Activated T-helper 1 cell treated with anti-CD3 and anti-CD28 coated beads, Interleukin-12 subunit alpha, Interleukin-12 subunit beta, Interleukin-2, Interleukin-4 antibody, amounts not matched to agents 30 ng/mL and 10 ng/mL and 1 ng/mL, durations not matched to agents 14 hours and 24 hours and 36 hours (primary cell): ENCODE measurements at regions of chr6 and their contacts with region 1.

Region 1: DNA sequence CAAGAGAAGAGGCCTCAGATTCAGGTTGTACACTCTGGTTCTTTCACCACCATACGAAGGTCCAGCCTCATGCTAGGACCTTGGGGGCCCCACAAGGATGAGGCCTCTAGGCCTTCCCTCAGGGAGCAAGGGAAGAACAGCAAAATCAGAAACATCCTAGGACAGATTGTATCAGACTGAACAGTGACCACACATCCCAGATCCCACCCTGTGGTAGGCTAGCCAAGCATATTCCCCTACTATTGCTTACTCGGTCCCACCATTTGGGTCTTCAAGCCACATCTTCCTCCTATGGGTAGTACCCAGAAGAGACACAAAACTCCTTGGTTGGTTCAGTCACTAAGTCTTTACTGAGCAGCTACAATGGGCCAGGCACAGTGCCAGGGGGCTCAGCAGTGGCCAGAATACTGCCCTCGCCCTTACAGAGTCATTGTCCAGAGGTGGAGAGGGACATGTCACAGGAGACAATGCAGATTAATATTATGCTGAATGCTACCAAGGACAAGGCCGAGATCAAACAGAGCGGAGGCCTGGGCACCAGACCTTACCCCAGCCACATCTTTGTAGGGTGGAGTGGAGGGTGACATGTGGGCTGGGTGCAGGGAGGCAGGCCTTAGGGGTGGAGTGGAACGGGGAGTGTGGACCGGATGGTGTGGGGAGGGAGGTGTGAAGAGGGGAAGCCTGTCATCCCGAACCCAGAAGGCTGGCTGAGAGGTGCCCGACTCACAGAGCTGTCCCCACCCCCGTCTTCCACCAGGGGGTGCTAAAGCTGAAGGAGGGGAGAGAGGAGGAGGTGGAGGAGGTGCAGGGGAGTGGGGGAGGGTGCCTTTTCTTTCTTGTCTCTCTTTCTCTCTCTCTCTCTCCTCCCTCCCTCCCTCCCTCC is 6.8 kb upstream of the MAPK13 start:
- DNase-seq: peak; percentile 88
- H3K4me3 Mint-ChIP-seq: peak overlapping the region; percentile 0
- H3K27ac Mint-ChIP-seq: peak overlapping the region; percentile 74
- H3K4me1 Mint-ChIP-seq: peaks cover 89% of the 10 kb centered on the region
- H3K27me3 Mint-ChIP-seq: no peaks in the 10 kb centered on the region

Region 2: GRCh38 chr6:35552285-35552917 is 571.1 kb before region 1 on chr6:
- intact Hi-C with region 1: no loop called
- DNase-seq: peak; percentile 40
- H3K4me3 Mint-ChIP-seq: no peak overlapping the region
- H3K27ac Mint-ChIP-seq: no peak overlapping the region
- H3K4me1 Mint-ChIP-seq: no peaks in the 10 kb centered on the region
- H3K27me3 Mint-ChIP-seq: peaks cover 14% of the 10 kb centered on the region

Region 3: DNA sequence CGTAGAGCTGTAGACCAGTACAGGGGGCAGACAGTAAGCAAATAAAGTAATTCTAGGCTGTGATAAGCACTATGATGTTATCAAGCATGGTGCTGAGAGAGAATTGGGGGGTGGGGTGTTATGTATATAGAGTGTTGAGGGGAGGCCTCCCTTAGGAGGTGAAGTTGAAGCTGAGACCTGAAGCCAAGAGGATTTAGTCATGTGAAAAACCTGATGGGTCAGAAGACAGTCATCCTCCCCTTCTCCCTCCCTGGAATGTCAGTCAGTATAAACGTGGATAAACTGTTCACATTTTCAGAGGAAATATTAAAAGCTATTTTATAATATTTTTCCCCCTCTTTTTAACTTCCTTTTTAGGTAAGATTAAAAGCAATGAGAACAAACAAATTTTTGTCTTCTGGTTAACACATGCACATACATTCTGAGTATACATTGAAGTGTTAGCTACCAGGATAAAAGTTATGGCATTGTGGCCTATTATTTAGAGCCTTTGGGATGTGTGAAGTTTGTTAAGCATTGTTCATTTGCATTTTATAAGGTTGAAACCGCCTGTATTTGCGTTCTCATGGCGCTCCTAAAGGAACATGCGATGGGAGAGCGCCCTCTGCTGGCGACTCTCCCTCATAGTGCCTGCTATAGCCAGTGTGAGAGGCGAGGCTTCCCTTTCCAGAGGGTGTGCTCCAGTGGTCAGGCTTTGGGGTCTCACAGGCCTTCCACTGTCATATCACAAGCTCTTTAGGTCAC is 28.6 kb before region 1 on chr6:
- intact Hi-C with region 1: loop called (anchors 2 kb)
- DNase-seq: peak; percentile 67
- H3K4me3 Mint-ChIP-seq: no peak overlapping the region
- H3K27ac Mint-ChIP-seq: peak overlapping the region; percentile 47
- H3K4me1 Mint-ChIP-seq: peaks cover 30% of the 10 kb centered on the region
- H3K27me3 Mint-ChIP-seq: no peaks in the 10 kb centered on the region

Region 4: DNA sequence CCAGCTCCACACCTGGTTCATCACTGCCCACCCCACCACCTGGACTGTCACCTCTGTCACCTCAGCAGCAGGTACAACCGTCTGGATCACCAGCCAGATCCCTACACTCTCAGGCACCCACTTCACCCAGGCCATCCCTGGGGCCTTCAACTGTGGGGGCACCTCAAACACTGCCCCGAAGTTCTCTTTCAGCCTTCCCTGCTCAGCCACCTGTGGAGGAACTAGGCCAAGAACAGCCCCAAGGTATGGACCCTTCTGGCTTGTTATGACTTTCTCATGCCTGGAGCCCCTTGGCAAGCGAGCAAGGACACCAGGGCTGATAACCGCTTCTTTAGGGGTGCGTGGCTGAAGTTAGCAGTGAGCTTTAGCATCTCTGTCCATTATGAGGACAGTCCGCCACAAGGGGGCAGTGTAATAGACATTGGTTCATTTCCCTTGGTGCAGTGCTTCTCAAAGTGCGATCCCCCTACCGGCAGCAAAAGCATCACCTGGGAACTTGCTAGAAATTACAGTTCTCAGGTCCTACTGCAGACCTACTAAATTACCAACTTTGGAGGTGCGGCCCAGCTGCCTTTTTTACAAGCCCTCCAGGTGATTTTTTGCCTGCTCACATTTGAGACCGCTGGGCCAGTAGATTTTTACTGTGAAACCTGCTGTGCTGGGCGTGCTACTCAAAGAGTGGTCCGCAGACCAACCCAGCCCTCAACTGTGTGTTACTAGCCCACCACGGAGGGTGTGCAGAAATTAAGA is 178.9 kb after region 1 on chr6:
- intact Hi-C with region 1: loop called (anchors 2 kb)
- DNase-seq: peak; percentile 85
- H3K4me3 Mint-ChIP-seq: no peak overlapping the region
- H3K27ac Mint-ChIP-seq: peak overlapping the region; percentile 18
- H3K4me1 Mint-ChIP-seq: peaks cover 8% of the 10 kb centered on the region
- H3K27me3 Mint-ChIP-seq: peaks cover 24% of the 10 kb centered on the region

Region 5: GRCh38 chr6:36442671-36443470 is 319.4 kb after region 1 on chr6 and contains the starts of genes KCTD20 and PXT1:
- intact Hi-C with region 1: loop called (anchors 5 kb)
- DNase-seq: peak; percentile 86
- H3K4me3 Mint-ChIP-seq: peak within 1 kb of the TSS; percentile 96
- H3K27ac Mint-ChIP-seq: peak within 1 kb of the TSS; percentile 95
- H3K4me1 Mint-ChIP-seq: peaks cover 48% of the 10 kb centered on the region
- H3K27me3 Mint-ChIP-seq: no peaks in the 10 kb centered on the region
- total RNA-seq, gene KCTD20: 62.4 and 62.8 TPM in 2 replicates
- total RNA-seq, gene PXT1: 0.16 and 0.29 TPM in 2 replicates

Region 6: GRCh38 chr6:36594029-36594815 is 470.7 kb after region 1 on chr6 and contains the start of gene SRSF3:
- intact Hi-C with region 1: loop called (anchors 10 kb)
- DNase-seq: peak; percentile 96
- H3K4me3 Mint-ChIP-seq: peak within 1 kb of the TSS; percentile 97
- H3K27ac Mint-ChIP-seq: peak within 1 kb of the TSS; percentile 100
- H3K4me1 Mint-ChIP-seq: peaks cover 44% of the 10 kb centered on the region
- H3K27me3 Mint-ChIP-seq: no peaks in the 10 kb centered on the region
- total RNA-seq, gene SRSF3: 525 and 546 TPM in 2 replicates